ENCODE measurements at regions of chr16 and their contacts with region 1.

Region 1: DNA sequence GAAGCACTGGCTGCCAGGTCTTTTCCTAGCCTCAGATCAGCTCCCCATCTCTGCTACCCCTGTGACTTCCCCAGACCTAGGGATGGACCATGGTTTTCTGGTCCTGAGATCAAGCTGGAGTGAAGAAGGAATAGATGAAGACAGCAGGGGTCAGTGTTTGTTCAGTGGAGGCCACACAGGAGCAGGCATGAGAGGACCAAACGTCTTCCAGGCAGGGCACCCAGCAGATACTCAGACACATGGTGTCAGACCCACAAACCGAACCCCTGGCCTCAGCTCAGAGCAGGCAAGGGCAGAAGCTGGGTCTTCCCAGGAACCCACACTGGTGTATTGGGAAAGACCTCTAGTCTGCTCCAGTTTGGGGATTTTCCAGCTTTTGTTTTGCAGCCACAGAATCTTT is 189.7 kb downstream of the IRX5 start:
- DNase-seq: no peak
- H3K4me3 ChIP-seq: no peak overlapping the region
- H3K27ac ChIP-seq: no peak overlapping the region
- H3K27me3 ChIP-seq: peaks cover 0 to 8% (median 0%) of the 10 kb centered on the region in 45 donors
- CTCF ChIP-seq: no peak

Region 2: GRCh38 chr16:55081622-55082590 is 38.5 kb before region 1 on chr16:
- intact Hi-C with region 1: loop called in 1 of 2 experiments (anchors 2 kb)
- DNase-seq: no peak
- H3K4me3 ChIP-seq: no peak overlapping the region
- H3K27ac ChIP-seq: no peak overlapping the region
- H3K27me3 ChIP-seq: peaks cover 0 to 6% (median 0%) of the 10 kb centered on the region in 45 donors
- CTCF ChIP-seq: no peak

Region 3: GRCh38 chr16:55101026-55101425 is 19.4 kb before region 1 on chr16:
- intact Hi-C with region 1: no loop called
- DNase-seq: no peak
- H3K4me3 ChIP-seq: no peak overlapping the region
- H3K27ac ChIP-seq: no peak overlapping the region
- H3K27me3 ChIP-seq: peaks cover 0 to 10% (median 0%) of the 10 kb centered on the region in 45 donors
- CTCF ChIP-seq: no peak

Region 4: DNA sequence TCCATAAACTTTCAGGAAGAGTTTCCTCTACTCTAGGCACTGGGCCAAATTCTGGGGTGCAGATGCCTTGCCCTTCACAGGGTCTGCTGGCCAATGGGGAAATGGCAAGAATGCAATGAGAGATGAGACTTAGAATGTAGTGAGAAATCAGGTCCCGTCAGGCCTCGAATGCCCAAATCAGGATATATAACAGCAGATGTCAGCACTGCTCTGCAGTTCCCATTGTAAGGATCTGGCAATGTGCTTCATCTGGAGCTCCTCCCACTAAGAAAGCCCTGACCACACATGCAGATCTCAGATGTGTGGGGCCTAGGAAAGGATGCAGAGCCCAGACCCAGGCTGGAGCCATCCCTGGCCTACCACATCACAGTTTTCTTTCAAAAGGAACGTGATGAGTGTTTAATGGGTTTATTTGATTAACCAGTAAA is 374.6 kb after region 1 on chr16:
- intact Hi-C with region 1: no loop called
- DNase-seq: peak in 3 of 10 donors; percentile 34 to 74 (median 69)
- H3K4me3 ChIP-seq: no peak overlapping the region
- H3K27ac ChIP-seq: peak overlapping the region in 22 of 59 donors; percentile 2 to 70 (median 46)
- H3K27me3 ChIP-seq: no peaks in the 10 kb centered on the region
- CTCF ChIP-seq: peak in 55 of 56 donors; percentile 48 to 89 (median 67)

Measured in dorsolateral prefrontal cortex (tissue), 120 donors.